Dorsolateral prefrontal cortex (tissue), 120 donors: ENCODE measurements at regions of chr22 and their contacts with region 1.

Region 1: DNA sequence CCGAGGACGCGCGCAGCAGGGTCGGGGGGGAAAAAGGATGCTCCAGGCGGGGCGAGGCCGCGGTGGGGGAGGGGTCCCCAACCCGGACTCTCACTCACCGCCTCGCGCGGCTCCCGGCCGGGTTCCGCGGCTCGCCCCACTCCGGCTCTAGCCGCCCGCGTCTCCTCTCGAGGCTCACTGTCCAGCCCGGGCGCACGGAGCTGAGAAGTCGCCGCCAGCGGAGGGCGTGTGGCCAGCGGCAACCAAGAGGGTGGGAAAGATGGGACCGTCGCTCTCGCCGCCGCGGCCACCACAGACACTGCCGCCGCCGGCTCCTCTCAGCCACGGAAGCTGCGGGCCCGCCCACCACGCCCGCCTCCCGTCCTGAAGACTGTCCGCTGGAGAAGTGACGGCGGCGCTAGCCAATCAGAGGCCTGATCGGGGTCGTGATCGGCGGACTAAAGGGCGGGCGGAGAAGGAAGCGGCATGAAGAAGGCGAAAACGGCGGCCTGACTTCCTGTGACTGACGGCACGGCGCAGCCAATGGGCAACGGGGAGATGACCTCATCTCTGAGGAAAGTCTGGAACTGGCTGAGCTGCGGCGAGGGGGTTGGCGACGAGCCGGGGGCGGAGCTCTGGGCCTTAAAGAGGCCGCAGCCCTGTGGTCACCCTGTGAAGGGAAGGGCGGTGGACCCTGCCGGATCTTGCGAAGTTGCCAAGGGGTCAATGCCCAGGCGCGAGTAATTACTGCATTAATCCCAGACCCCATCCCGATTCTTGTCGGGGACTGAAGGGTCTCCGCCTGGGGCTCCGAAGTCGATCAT is at the start of gene MRTFA:
- DNase-seq: peak; percentile 100
- H3K4me3 ChIP-seq: peak within 1 kb of the TSS; percentile 65 to 99 (median 95)
- H3K27ac ChIP-seq: peak within 1 kb of the TSS; percentile 4 to 97 (median 90)
- H3K27me3 ChIP-seq: no peaks in the 10 kb centered on the region
- CTCF ChIP-seq: peak in 25 of 56 donors; percentile 4 to 44 (median 14)
- total RNA-seq, gene MRTFA: 43.3 to 100 (median 72.1) TPM

Region 2: DNA sequence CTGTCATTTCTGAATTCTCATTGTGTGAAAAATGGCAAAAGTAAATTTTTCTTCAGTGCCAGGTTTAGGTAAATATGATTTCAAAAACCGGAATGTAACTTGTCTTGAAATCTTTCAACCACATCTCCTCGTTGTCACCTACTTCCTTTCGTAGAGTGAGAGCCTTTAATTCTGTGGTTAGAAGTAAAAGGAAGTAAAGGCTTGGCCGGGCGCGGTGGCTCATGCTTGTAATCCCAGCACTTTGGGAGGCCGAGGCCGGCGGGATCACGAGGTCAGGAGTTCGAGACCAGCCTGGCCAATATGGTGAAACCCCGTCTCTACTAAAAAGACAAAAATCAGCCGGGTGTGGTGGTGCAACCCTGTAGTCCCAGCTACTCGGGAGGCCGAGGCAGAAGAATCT is 236.4 kb before region 1 on chr22:
- intact Hi-C with region 1: no loop called
- DNase-seq: no peak
- H3K4me3 ChIP-seq: no peak overlapping the region
- H3K27ac ChIP-seq: peak overlapping the region in 31 of 59 donors; percentile 1 to 68 (median 42)
- H3K27me3 ChIP-seq: no peaks in the 10 kb centered on the region
- CTCF ChIP-seq: no peak

Region 3: GRCh38 chr22:40525249-40525884 is 111.2 kb before region 1 on chr22:
- intact Hi-C with region 1: loop called (anchors 5 kb)
- DNase-seq: peak in 6 of 10 donors; percentile 18 to 47 (median 32)
- H3K4me3 ChIP-seq: no peak overlapping the region
- H3K27ac ChIP-seq: no peak overlapping the region
- H3K27me3 ChIP-seq: no peaks in the 10 kb centered on the region
- CTCF ChIP-seq: peak; percentile 41 to 88 (median 76)

Region 4: GRCh38 chr22:40533712-40534378 is 102.7 kb before region 1 on chr22:
- intact Hi-C with region 1: loop called (anchors 5 kb)
- DNase-seq: peak in 1 of 10 donors; percentile 30
- H3K4me3 ChIP-seq: peak overlapping the region in 57 of 59 donors; percentile 6 to 62 (median 44)
- H3K27ac ChIP-seq: peak overlapping the region in 58 of 59 donors; percentile 11 to 86 (median 70)
- H3K27me3 ChIP-seq: no peaks in the 10 kb centered on the region
- CTCF ChIP-seq: peak in 1 of 56 donors; percentile 12

Region 5: GRCh38 chr22:40620464-40621046 is 16.0 kb before region 1 on chr22:
- intact Hi-C with region 1: no loop called
- DNase-seq: no peak
- H3K4me3 ChIP-seq: no peak overlapping the region
- H3K27ac ChIP-seq: no peak overlapping the region
- H3K27me3 ChIP-seq: no peaks in the 10 kb centered on the region
- CTCF ChIP-seq: no peak